ENCODE measurements at regions of chr1 and their contacts with region 1.

Region 1: DNA sequence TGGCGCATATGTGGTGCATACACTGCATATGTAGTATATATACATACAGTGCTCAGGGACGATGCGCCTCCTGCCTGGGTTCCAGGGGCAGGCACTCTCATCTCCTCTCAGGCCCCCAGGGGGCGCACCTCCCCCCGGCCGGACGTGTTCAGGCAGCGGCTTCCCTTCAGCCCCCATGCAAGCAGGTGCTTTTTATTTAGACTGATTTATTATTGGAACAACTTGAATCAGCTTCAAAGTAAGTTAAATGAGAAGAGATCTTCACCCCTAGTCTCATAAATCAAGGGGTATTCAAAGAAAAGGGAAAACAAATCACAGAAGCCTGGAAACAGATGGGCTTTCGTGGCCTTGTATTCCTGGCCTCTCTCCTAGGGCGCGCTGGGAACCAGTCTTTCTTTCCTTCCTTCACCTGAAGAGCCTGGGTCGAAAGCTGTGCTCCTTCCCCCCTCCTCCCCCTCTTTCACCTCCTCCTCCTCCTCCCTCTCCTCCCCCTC is 64.6 kb downstream of the UBIAD1 start:
- DNase-seq: peak; percentile 88
- H3K4me3 ChIP-seq: peak overlapping the region in 1 of 2 experiments; percentile 41; a peak in 1 of 4 replicates
- H3K27ac ChIP-seq: no peak overlapping the region
- H3K4me1 ChIP-seq: peaks cover 0 to 30% of the 10 kb centered on the region in 2 experiments; a peak in 1 of 4 replicates
- H3K27me3 ChIP-seq: no peaks in the 10 kb centered on the region; the same call in 1 of the 2 replicates
- CTCF ChIP-seq: peak; percentile 74
- EP300 ChIP-seq: 0 out of 4 replicates have a peak, but pooled peaks of 1 of the 2 experiments have one; percentile 10
- RAD21 ChIP-seq: peak; percentile 76

Region 2: GRCh38 chr1:11458811-11459275 is 121.2 kb after region 1 on chr1:
- CTCF ChIA-PET with region 1: interaction called, 10 read pairs
- POLR2A ChIA-PET with region 1: no interaction called
- DNase-seq: peak; percentile 90
- H3K4me3 ChIP-seq: no peak overlapping the region
- H3K27ac ChIP-seq: peak overlapping the region in 1 of 2 experiments; percentile 90; a peak in 2 of 4 replicates
- H3K4me1 ChIP-seq: peaks cover 0 to 61% of the 10 kb centered on the region in 2 experiments; a peak in 2 of 4 replicates
- H3K27me3 ChIP-seq: peaks cover 7% of the 10 kb centered on the region; the same call in 1 of the 2 replicates
- CTCF ChIP-seq: no peak
- EP300 ChIP-seq: peak in 1 of 2 experiments; percentile 89; a peak in 2 of 4 replicates
- RAD21 ChIP-seq: peak; percentile 64

Measured in SK-N-SH (cell line).